Calu3 (cell line): ENCODE measurements at regions of chr14 and their contacts with region 1.

Region 1: DNA sequence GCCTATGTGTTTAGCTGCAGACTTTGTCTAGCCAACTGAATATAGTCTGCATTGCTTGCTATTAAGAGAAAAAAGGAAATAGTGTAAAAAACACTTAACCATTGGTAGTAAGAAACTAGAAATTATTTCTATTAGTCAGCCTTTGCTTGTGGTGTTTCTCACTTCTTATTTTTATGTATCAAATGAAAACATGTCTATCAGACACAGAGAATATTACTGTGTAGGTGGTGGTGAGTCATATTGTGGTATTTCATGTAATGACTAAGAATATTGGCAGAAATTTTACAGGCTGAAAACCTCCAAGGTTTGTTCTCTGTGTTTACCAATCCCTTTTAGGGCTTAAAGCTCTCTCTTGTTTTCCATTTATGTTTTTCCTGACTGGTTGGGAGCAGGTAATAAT is 87.2 kb downstream of the DAAM1 start:
- DNase-seq: no peak
- H3K4me3 Mint-ChIP-seq: peak overlapping the region; percentile 22
- H3K27ac Mint-ChIP-seq: peak overlapping the region; percentile 88
- H3K4me1 Mint-ChIP-seq: peaks cover 49% of the 10 kb centered on the region
- H3K27me3 Mint-ChIP-seq: no peaks in the 10 kb centered on the region
- CTCF ChIP-seq: no peak

Region 2: GRCh38 chr14:59320763-59321640 is 45.3 kb after region 1 on chr14:
- CTCF ChIA-PET with region 1: no interaction called
- intact Hi-C with region 1: loop called (anchors 5 kb)
- DNase-seq: no peak
- H3K4me3 Mint-ChIP-seq: no peak overlapping the region
- H3K27ac Mint-ChIP-seq: no peak overlapping the region
- H3K4me1 Mint-ChIP-seq: no peaks in the 10 kb centered on the region
- H3K27me3 Mint-ChIP-seq: no peaks in the 10 kb centered on the region
- CTCF ChIP-seq: no peak

Region 3: GRCh38 chr14:59360923-59361794 is 85.5 kb after region 1 on chr14:
- CTCF ChIA-PET with region 1: no interaction called
- intact Hi-C with region 1: loop called (anchors 2 kb)
- DNase-seq: peak; percentile 81
- H3K4me3 Mint-ChIP-seq: peak overlapping the region; percentile 55
- H3K27ac Mint-ChIP-seq: peak overlapping the region; percentile 79
- H3K4me1 Mint-ChIP-seq: peaks cover 46% of the 10 kb centered on the region
- H3K27me3 Mint-ChIP-seq: no peaks in the 10 kb centered on the region
- CTCF ChIP-seq: no peak